Activated T-helper 2 cell treated with anti-CD3 and anti-CD28 coated beads, Interferon-gamma antibody, Interleukin-2, Interleukin-4, amounts not matched to agents 10 μg/mL and 5 μg/mL and 100 μg/mL, durations not matched to agents 14 hours and 24 hours and 36 hours (primary cell): ENCODE measurements at regions of chr12 and their contacts with region 1.

Region 1: GRCh38 chr12:24838531-24838950 is 110.4 kb downstream of the BCAT1 start:
- DNase-seq: peak; percentile 13
- H3K4me3 Mint-ChIP-seq: peak overlapping the region; percentile 2
- H3K27ac Mint-ChIP-seq: peak overlapping the region; percentile 77
- H3K4me1 Mint-ChIP-seq: peaks cover 44% of the 10 kb centered on the region
- H3K27me3 Mint-ChIP-seq: no peaks in the 10 kb centered on the region

Region 2: DNA sequence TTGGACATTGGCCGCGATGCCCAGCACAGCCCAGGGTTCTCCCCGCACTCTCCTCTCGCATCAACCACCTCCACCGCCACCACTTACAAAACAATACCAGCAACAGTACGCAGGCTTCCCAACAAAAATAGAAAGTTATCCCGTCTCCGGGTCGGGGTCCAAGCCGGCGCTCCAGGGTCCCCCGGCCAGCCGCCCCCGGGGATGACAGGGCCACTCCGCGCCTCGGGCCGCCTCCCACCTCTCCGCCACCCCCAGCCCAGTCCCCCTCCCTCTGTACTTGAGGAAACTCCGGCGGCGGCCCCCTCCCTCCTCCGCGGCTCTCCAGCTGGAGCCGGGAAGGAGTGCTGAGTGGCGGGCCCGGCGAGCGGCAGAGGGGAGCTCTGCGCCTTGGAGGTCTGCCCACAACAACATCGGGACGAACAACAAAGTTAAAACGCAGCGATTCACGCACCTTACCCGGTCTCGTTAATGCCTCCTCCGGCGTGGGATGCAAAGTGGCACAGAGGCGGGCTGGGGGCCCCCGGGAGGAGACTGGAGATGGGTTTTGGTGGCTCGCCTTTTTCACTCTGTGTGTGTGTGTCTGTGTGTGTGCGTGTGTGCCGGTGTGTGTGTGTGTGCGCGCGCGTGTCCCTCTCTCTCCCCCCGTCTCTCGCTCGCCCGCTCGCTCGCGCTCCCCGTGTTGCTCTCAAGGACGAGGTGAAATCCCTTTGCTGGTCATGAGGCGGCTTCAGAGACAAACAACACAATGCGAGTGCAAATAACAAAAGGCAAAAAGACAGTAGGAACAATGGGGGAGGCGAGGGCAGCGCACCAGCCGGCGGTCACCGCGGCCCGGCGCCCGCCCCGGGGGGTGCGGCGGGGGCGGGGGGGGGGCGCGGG is 276.4 kb before region 1 on chr12:
- intact Hi-C with region 1: loop called (anchors 2 kb)
- DNase-seq: no peak
- H3K4me3 Mint-ChIP-seq: peak overlapping the region; percentile 88
- H3K27ac Mint-ChIP-seq: no peak overlapping the region
- H3K4me1 Mint-ChIP-seq: peaks cover 17% of the 10 kb centered on the region
- H3K27me3 Mint-ChIP-seq: peaks cover 68% of the 10 kb centered on the region

Region 3: DNA sequence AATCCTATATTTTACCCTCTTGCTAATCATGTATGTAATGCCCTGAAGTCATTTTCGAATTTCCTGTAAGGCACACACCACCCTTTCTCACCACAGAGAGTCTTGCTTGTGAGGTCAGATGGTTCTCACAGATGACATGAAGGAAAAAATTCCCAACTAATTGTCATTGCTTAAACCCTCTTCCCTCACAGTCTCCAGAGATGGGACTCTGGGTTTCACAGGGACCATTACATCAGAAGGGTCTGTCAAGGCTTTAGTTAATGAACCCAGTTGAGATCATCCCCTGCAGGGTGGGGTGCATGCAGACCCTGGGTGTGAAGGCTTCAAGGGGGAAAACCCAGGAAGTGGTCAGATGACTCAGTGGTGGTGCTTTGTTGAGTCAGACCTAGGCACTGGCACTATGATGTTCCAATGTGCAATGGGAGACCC is 119.2 kb before region 1 on chr12:
- intact Hi-C with region 1: loop called (anchors 1 kb)
- DNase-seq: no peak
- H3K4me3 Mint-ChIP-seq: no peak overlapping the region
- H3K27ac Mint-ChIP-seq: no peak overlapping the region
- H3K4me1 Mint-ChIP-seq: peaks cover 23% of the 10 kb centered on the region
- H3K27me3 Mint-ChIP-seq: no peaks in the 10 kb centered on the region

Region 4: GRCh38 chr12:24861766-24862575 is 23.4 kb after region 1 on chr12:
- intact Hi-C with region 1: no loop called
- DNase-seq: no peak
- H3K4me3 Mint-ChIP-seq: no peak overlapping the region
- H3K27ac Mint-ChIP-seq: no peak overlapping the region
- H3K4me1 Mint-ChIP-seq: peaks cover 17% of the 10 kb centered on the region
- H3K27me3 Mint-ChIP-seq: no peaks in the 10 kb centered on the region

Region 5: DNA sequence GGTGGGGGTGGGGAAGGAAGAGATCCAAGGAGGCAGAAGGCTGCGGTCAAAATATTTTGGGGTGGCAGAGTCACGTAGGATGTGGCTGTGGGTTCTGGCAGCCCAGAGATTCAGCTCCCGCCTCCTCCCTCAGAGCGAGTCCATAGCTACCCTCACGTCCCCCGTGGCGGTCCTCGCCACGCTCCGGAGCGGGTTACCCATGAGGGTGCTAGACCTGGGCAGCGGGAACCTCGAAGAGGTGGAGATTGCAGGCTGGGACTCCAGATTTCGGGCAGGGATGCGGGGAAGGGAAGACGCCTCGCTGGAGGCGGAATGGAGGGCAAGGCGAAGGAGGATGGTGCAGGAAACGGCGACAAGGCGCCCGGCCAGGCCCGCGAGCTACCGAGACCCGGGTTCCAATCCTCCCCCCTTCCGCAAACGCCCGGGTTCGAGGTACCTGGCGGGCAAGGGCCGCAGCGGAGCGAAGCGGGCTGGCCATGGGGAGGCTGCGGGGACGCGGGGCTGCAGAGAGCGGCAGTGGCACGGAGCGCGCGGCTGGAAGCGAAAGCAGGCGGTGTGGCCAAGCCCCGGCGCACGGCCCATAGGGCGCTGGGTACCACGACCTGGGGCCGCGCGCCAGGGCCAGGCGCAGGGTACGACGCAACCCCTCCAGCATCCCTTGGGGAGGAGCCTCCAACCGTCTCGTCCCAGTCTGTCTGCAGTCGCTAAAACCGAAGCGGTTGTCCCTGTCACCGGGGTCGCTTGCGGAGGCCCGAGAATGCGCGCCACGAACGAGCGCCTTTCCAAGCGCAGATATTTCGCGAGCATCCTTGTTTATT is 64.2 kb after region 1 on chr12:
- intact Hi-C with region 1: loop called (anchors 1 kb)
- DNase-seq: peak; percentile 28
- H3K4me3 Mint-ChIP-seq: peak overlapping the region; percentile 96
- H3K27ac Mint-ChIP-seq: peak overlapping the region; percentile 93
- H3K4me1 Mint-ChIP-seq: peaks cover 36% of the 10 kb centered on the region
- H3K27me3 Mint-ChIP-seq: peaks cover 6% of the 10 kb centered on the region

Region 6: GRCh38 chr12:25052196-25052913 is 213.8 kb after region 1 on chr12:
- intact Hi-C with region 1: loop called (anchors 1 kb)
- DNase-seq: peak; percentile 61
- H3K4me3 Mint-ChIP-seq: peak overlapping the region; percentile 85
- H3K27ac Mint-ChIP-seq: peak overlapping the region; percentile 100
- H3K4me1 Mint-ChIP-seq: peaks cover 45% of the 10 kb centered on the region
- H3K27me3 Mint-ChIP-seq: peaks cover 3% of the 10 kb centered on the region

Region 7: GRCh38 chr12:25377469-25378177 is 539.1 kb after region 1 on chr12:
- intact Hi-C with region 1: loop called (anchors 5 kb)
- DNase-seq: peak; percentile 35
- H3K4me3 Mint-ChIP-seq: peak overlapping the region; percentile 43
- H3K27ac Mint-ChIP-seq: peak overlapping the region; percentile 70
- H3K4me1 Mint-ChIP-seq: peaks cover 70% of the 10 kb centered on the region
- H3K27me3 Mint-ChIP-seq: no peaks in the 10 kb centered on the region